ENCODE measurements at regions of chr4 and their contacts with region 1.

Region 1: GRCh38 chr4:173211838-173212237 is 43.2 kb downstream of the GALNT7 start:
- DNase-seq: peak in 1 of 2 experiments; percentile 84
- H3K4me3 ChIP-seq: 0 out of 2 replicates have a peak overlapping the region, but pooled peaks have one; percentile 10
- H3K27ac ChIP-seq: peak overlapping the region; percentile 75
- H3K4me1 ChIP-seq: peaks cover 53% of the 10 kb centered on the region
- H3K27me3 ChIP-seq: no peaks in the 10 kb centered on the region
- CTCF ChIP-seq: no peak

Region 2: DNA sequence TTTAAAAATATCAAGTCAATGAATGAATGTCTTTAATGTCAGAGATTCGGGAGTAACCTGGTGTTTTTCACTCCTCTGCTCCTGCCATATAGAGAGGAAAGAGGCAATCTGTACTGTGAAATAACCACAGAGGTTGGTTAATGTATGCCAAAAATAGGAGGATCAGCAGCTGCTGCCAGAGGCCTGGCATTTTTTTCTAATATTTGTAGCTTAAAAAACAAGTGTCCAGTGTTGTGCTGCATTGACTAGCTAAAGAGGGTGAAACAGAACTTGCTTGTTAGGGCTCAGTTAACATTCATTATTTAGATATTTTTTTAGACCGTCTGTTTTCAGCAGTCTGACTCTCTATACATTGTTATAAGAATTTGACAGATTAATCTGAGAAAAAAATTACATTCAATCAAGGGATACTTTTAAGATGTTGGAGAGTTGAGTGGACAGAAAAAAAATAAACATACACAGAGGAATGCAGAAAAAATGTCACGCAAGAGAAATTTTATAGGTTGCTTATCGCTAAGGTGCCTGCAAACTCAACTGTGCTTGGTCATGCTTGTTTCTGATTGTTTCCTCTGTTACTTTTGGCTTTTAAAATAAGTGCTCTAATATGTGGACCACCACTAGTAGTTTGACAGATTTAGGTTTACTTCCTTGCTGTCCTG is 435.5 kb before region 1 on chr4:
- CTCF ChIA-PET with region 1: no interaction called
- POLR2A ChIA-PET with region 1: no interaction called
- intact Hi-C with region 1: no loop called
- DNase-seq: no peak
- H3K4me3 ChIP-seq: no peak overlapping the region
- H3K27ac ChIP-seq: no peak overlapping the region
- H3K4me1 ChIP-seq: no peaks in the 10 kb centered on the region
- H3K27me3 ChIP-seq: no peaks in the 10 kb centered on the region
- CTCF ChIP-seq: no peak

Region 3: GRCh38 chr4:173121076-173121561 is 90.7 kb before region 1 on chr4:
- CTCF ChIA-PET with region 1: no interaction called
- POLR2A ChIA-PET with region 1: no interaction called
- intact Hi-C with region 1: loop called (anchors 5 kb)
- DNase-seq: peak; percentile 52 to 56
- H3K4me3 ChIP-seq: no peak overlapping the region
- H3K27ac ChIP-seq: no peak overlapping the region
- H3K4me1 ChIP-seq: 0 out of 2 replicates have a peak, but pooled peaks cover 7% of the 10 kb centered on the region
- H3K27me3 ChIP-seq: no peaks in the 10 kb centered on the region
- CTCF ChIP-seq: no peak

Region 4: DNA sequence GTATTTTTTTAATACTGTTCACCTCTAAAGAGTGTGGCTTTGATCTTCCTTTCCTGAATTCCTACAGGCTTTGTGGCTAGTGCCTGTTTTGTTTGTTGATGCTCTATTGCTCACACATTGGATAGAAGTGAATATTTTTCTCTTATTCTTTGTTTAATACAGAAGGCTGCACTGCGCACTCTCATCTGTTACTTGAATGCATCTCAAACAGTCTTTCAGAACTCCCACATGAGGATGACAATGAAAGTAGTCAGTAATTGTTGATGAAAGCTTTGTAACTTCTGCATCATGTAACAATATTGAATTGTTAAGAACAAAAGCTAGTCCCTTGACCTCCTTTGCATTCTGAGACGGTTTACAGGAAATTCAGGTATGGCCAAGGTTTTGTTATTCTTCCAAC is 72.3 kb before region 1 on chr4:
- CTCF ChIA-PET with region 1: no interaction called
- POLR2A ChIA-PET with region 1: no interaction called
- intact Hi-C with region 1: no loop called
- DNase-seq: no peak
- H3K4me3 ChIP-seq: no peak overlapping the region
- H3K27ac ChIP-seq: no peak overlapping the region
- H3K4me1 ChIP-seq: no peaks in the 10 kb centered on the region
- H3K27me3 ChIP-seq: no peaks in the 10 kb centered on the region
- CTCF ChIP-seq: no peak

Region 5: GRCh38 chr4:173191623-173192041 is 20.2 kb before region 1 on chr4:
- CTCF ChIA-PET with region 1: no interaction called
- POLR2A ChIA-PET with region 1: no interaction called
- intact Hi-C with region 1: loop called (anchors 1 kb)
- DNase-seq: peak in 1 of 2 experiments; percentile 97
- H3K4me3 ChIP-seq: no peak overlapping the region; the same call in 1 of the 2 replicates
- H3K27ac ChIP-seq: peak overlapping the region; percentile 95
- H3K4me1 ChIP-seq: peaks cover 26% of the 10 kb centered on the region
- H3K27me3 ChIP-seq: no peaks in the 10 kb centered on the region
- CTCF ChIP-seq: no peak

Measured in PC-9 (cell line).